Spleen (tissue), 13 donors: ENCODE measurements at regions of chr16 and their contacts with region 1.

Region 1: GRCh38 chr16:71311553-71312158 is 22.5 kb upstream of the CMTR2 start:
- DNase-seq: no peak
- H3K4me3 ChIP-seq: no peak overlapping the region
- H3K27ac ChIP-seq: no peak overlapping the region
- H3K4me1 ChIP-seq: no peaks in the 10 kb centered on the region
- H3K27me3 ChIP-seq: peaks cover 0 to 32% (median 6%) of the 10 kb centered on the region in 7 donors
- CTCF ChIP-seq: peak; percentile 56 to 84 (median 77)
- POLR2A ChIP-seq: no peak

Region 2: GRCh38 chr16:71214746-71215381 is 96.8 kb before region 1 on chr16:
- intact Hi-C with region 1: loop called (anchors 10 kb)
- DNase-seq: no peak
- H3K4me3 ChIP-seq: no peak overlapping the region
- H3K27ac ChIP-seq: no peak overlapping the region
- H3K4me1 ChIP-seq: peaks cover 0 to 7% (median 0%) of the 10 kb centered on the region in 6 donors
- H3K27me3 ChIP-seq: peaks cover 0 to 5% (median 0%) of the 10 kb centered on the region in 7 donors
- CTCF ChIP-seq: peak in 1 of 11 experiments; percentile 14
- POLR2A ChIP-seq: no peak